GM18951 (cell line): ENCODE measurements at regions of chr2 and their contacts with region 1.

Region 1: GRCh38 chr2:224268441-224268840 is 133.5 kb downstream of the FAM124B start:
- POLR2A ChIP-seq: no peak

Region 2: DNA sequence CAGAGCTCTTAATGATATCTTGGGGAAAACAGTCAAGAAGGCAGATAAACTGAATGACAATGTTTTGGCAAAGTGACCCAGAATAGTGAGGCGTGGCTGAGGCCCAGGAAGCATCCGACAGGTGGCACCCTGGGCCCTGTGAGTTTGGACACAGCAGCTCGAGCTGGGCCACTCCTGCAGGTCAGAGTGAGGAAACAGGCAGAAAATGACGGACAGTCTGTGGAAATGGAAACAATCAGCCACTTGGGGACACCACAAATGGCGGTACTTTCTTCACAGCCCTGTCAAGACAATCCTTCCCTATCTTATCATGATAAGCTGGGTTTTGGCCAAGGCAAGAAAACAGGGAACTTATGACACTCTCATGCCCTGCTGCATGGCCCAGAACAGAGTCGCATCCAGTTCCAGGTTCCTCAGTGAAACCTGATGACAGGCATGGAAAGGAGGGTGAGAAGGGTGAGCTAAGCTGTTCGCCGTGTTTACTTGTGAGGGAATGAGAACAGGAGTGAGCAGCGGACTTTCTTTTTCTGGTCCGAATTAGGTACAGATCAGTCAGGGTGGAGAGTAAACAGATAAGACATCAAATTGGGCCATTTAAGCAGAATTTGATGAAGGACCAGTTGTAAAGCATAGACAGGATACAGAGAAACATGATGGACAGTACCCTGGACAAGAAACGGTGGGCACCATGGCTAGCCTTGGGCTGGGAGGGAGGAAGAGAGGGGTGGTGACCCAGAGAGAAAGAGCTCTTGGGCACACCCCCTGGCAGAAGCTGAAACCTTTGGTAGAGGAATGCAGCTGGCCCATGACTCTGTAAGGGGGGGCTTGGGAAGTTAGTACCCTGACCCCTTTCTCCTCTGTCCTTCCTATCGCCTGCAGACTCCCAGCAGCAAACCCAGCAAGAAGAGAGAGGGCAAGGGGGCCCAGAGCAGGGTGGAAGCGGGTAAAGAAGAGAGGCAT is 278.9 kb before region 1 on chr2:
- in situ Hi-C with region 1: loop called (anchors 10 kb)
- POLR2A ChIP-seq: no peak

Region 3: GRCh38 chr2:224691563-224691962 is 423.1 kb after region 1 on chr2:
- in situ Hi-C with region 1: no loop called
- POLR2A ChIP-seq: no peak